ENCODE measurements at regions of chr12 and their contacts with region 1.

Region 1: DNA sequence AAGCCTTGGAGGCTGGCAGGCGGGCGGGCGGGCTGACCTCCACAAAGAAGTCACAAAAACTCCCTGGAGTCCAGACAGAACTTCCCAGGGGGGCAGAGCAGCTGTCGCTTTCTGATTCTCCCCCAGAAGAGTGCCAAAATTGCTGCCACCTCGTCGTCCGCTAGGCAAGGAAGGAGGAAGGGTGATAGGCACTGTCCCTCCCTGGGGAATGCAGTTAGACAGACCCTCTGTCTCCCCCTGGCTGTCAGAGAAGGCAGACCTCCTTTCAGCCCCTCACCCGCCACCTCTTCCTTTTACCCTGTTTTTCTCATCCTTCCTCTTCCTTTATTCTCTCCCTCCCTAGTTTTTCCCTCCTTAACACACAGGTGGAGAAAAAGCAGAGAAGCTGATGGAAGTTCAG is 18.7 kb downstream of the GRIN2B start:
- DNase-seq: peak; percentile 5
- ATAC-seq: peak; percentile 93
- H3K4me3 ChIP-seq: no peak overlapping the region
- H3K27ac ChIP-seq: no peak overlapping the region
- H3K4me1 ChIP-seq: no peaks in the 10 kb centered on the region
- H3K27me3 ChIP-seq: peaks cover 2 to 13% of the 10 kb centered on the region in 2 experiments; a peak in 2 of 5 replicates
- CTCF ChIP-seq: peak; percentile 60
- EP300 ChIP-seq: no peak
- POLR2A ChIP-seq: no peak
- RAD21 ChIP-seq: no peak

Region 2: DNA sequence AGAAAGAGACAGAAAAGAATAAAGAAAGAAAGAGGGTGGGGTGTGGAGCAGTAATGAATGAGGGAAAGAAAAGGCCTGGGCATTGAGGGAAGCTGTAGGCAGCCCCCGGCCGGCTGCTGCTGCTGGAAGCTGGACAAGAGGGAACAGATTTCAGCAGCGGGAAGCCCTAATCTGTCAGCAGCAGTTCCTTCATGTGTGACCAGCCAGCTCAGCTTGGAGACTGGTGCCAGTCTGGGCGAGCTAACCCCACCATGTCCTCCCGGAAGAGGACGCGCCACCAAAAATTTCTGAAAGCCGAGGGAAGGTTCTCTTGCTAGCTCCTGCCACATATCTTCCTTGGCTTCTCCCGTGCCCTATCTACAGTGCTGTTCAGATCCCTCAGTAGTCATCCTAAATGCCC is 218.1 kb before region 1 on chr12:
- CTCF ChIA-PET with region 1: no interaction called
- POLR2A ChIA-PET with region 1: no interaction called
- in situ Hi-C with region 1: no loop called
- intact Hi-C with region 1: loop called (anchors 1 kb)
- DNase-seq: no peak
- ATAC-seq: no peak
- H3K4me3 ChIP-seq: no peak overlapping the region
- H3K27ac ChIP-seq: no peak overlapping the region
- H3K4me1 ChIP-seq: no peaks in the 10 kb centered on the region
- H3K27me3 ChIP-seq: no peaks in the 10 kb centered on the region; a peak in 2 of 5 replicates
- CTCF ChIP-seq: no peak
- EP300 ChIP-seq: no peak
- POLR2A ChIP-seq: no peak
- RAD21 ChIP-seq: no peak

Region 3: GRCh38 chr12:13864081-13864673 is 98.5 kb before region 1 on chr12:
- CTCF ChIA-PET with region 1: interaction called, 3 read pairs
- POLR2A ChIA-PET with region 1: no interaction called
- in situ Hi-C with region 1: no loop called
- intact Hi-C with region 1: loop called (anchors 5 kb)
- DNase-seq: peak; percentile 48
- ATAC-seq: peak; percentile 94
- H3K4me3 ChIP-seq: no peak overlapping the region
- H3K27ac ChIP-seq: no peak overlapping the region
- H3K4me1 ChIP-seq: no peaks in the 10 kb centered on the region
- H3K27me3 ChIP-seq: no peaks in the 10 kb centered on the region
- CTCF ChIP-seq: peak; percentile 90
- EP300 ChIP-seq: no peak
- POLR2A ChIP-seq: no peak
- RAD21 ChIP-seq: 0 out of 2 replicates have a peak, but pooled peaks have one; percentile 45